Activated CD4-positive, alpha-beta memory T cell treated with anti-CD3 and anti-CD28 coated beads, Interleukin-2, amount 10 ng/mL, durations not matched to agents 7 days and 5 days (primary cell): ENCODE measurements at regions of chr11 and their contacts with region 1.

Region 1: GRCh38 chr11:36564376-36565030 is 3.3 kb upstream of the RAG1 start:
- DNase-seq: peak; percentile 45
- H3K4me3 Mint-ChIP-seq: no peak overlapping the region
- H3K27ac Mint-ChIP-seq: no peak overlapping the region
- H3K4me1 Mint-ChIP-seq: peaks cover 4% of the 10 kb centered on the region
- H3K27me3 Mint-ChIP-seq: peaks cover 52% of the 10 kb centered on the region

Region 2: DNA sequence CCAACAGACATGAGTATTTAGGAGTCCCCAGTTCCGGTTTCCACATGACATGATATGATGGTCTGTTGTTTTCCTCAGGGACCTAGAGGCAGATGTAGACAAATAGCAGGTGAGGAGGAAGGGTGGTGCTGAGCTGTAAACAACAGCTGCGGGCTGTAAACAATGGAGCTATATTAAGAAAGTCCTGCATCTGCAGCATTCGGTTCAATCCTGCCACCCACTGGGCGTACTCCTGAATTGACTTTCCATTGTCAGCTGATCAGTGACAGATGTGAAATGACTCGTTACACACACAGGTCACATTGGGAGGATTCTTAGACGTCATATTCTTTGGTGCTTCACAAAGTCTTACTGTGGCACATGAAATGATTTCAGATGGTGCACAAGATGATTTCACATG is 23.5 kb before region 1 on chr11:
- CTCF ChIA-PET with region 1: no interaction called
- POLR2A ChIA-PET with region 1: no interaction called
- DNase-seq: peak; percentile 50
- H3K4me3 Mint-ChIP-seq: no peak overlapping the region
- H3K27ac Mint-ChIP-seq: no peak overlapping the region
- H3K4me1 Mint-ChIP-seq: peaks cover 5% of the 10 kb centered on the region
- H3K27me3 Mint-ChIP-seq: peaks cover 10% of the 10 kb centered on the region

Region 3: DNA sequence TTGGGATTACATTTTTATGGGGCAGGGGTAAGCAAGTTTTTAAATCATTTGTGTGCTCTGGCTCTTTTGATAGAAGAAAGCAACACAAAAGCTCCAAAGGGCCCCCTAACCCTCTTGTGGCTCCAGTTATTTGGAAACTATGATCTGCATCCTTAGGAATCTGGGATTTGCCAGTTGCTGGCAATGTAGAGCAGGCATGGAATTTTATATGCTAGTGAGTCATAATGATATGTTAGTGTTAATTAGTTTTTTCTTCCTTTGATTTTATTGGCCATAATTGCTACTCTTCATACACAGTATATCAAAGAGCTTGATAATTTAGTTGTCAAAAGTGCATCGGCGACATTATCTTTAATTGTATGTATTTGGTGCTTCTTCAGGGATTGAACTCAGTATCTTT is 13.4 kb after region 1 on chr11:
- CTCF ChIA-PET with region 1: interaction called, 27 read pairs
- POLR2A ChIA-PET with region 1: no interaction called
- DNase-seq: no peak
- H3K4me3 Mint-ChIP-seq: no peak overlapping the region
- H3K27ac Mint-ChIP-seq: no peak overlapping the region
- H3K4me1 Mint-ChIP-seq: no peaks in the 10 kb centered on the region
- H3K27me3 Mint-ChIP-seq: peaks cover 13% of the 10 kb centered on the region

Region 4: DNA sequence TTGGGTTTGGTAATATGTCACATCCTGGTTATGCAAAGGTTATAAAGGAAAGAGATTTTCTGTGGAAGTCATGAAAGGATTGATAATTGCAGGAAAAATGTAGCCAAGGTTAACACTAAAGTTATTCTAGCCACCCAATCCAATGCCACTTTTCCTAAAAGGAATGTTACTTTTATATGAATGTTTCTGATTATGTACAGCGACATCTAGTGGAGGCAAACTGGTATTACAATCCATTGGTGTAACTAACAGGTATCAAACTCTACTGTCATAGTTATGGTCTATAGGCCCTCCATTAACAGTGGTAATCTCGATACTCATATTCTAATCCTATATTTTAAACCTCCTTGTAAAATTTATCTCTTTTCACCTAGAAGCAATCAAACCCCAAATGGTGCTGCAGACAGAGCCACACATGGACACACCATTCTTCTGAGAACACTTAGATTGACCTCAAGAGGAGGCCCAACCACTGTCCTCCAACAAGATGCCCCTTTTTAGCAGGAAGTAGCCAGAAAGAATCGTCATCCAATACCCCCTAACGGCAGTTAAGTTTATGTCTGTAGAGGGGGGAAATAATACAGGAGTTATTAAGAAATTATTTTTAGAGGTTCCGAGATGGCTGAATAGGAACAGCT is 108.4 kb after region 1 on chr11:
- CTCF ChIA-PET with region 1: interaction called, 30 read pairs
- POLR2A ChIA-PET with region 1: no interaction called
- DNase-seq: no peak
- H3K4me3 Mint-ChIP-seq: no peak overlapping the region
- H3K27ac Mint-ChIP-seq: no peak overlapping the region
- H3K4me1 Mint-ChIP-seq: no peaks in the 10 kb centered on the region
- H3K27me3 Mint-ChIP-seq: no peaks in the 10 kb centered on the region